ENCODE measurements at regions of chr5 and their contacts with region 1.

Region 1: GRCh38 chr5:169980418-169981053 is at the start of gene INSYN2B:
- DNase-seq: peak; percentile 47
- H3K4me3 ChIP-seq: peak within 1 kb of the TSS; percentile 70
- CTCF ChIP-seq: peak; percentile 78

Region 2: DNA sequence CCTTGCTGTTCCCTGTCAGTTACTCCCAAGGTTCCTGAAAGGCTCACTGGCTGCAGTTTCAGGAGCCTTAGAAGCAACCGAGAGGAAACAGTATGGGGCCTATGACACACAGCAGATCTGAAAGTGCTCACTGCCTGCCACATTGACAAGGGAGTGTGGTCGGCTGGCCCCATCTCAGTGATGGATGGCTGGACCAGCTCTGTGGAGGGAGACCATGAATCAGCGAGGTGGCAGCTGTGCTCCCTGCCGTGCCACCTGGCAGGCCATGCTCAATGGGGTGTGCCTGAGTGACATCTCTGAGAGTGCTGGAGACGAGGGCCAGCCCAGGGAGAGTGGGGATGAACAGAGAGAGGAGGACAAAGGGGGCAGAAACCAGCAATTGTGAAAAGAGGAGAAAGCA is 294.4 kb before region 1 on chr5:
- CTCF ChIA-PET with region 1: interaction called, 10 read pairs
- POLR2A ChIA-PET with region 1: no interaction called
- DNase-seq: no peak
- H3K4me3 ChIP-seq: no peak overlapping the region
- CTCF ChIP-seq: no peak

Region 3: DNA sequence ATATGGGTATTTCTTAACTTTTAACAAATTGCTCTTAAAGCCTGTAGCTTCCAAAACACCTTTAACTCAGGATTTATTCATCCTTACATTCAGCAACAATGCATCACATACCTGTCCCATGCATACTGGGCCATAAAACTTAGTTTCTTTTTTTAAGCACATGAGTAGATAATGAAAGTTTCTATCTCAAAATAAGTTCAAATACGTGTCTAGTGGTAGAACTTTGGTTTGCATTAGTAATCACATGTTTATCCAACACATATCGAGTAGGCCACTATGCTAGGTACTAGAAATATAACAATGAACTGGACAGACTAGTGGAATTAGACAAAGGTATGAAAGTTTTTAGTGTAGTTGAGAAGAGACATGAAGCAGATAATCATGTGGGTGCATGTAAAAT is 243.9 kb before region 1 on chr5:
- CTCF ChIA-PET with region 1: interaction called, 36 read pairs
- POLR2A ChIA-PET with region 1: no interaction called
- DNase-seq: no peak
- H3K4me3 ChIP-seq: no peak overlapping the region
- CTCF ChIP-seq: no peak

Region 4: GRCh38 chr5:169805527-169805934 is 175.0 kb before region 1 on chr5:
- CTCF ChIA-PET with region 1: interaction called, 26 read pairs
- POLR2A ChIA-PET with region 1: no interaction called
- DNase-seq: no peak
- H3K4me3 ChIP-seq: no peak overlapping the region
- CTCF ChIP-seq: no peak

Region 5: DNA sequence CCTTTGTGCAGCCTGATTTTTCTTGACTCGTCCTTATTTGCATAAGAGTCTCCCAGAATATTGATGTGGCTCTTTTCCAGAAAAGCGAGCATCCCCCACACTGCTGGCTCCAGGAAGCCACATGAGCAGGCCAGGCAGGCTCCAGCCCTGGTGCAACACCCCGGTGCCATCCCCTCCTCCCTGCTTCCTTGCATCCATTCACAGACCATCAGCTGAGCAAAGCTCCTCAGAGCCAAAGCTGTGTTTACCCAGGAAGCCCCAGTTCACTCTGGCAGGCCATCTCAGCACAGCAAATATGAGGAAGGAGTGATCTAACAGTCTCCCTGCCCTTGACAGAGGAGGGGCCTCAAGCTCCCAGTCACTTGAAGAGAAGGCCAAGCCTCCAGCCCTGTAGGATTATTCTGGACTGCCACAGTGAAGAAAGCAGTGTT is 34.7 kb before region 1 on chr5:
- CTCF ChIA-PET with region 1: interaction called, 32 read pairs
- POLR2A ChIA-PET with region 1: no interaction called
- DNase-seq: peak; percentile 89
- H3K4me3 ChIP-seq: peak overlapping the region; percentile 6; the same call in 1 of the 2 replicates
- CTCF ChIP-seq: no peak

Region 6: DNA sequence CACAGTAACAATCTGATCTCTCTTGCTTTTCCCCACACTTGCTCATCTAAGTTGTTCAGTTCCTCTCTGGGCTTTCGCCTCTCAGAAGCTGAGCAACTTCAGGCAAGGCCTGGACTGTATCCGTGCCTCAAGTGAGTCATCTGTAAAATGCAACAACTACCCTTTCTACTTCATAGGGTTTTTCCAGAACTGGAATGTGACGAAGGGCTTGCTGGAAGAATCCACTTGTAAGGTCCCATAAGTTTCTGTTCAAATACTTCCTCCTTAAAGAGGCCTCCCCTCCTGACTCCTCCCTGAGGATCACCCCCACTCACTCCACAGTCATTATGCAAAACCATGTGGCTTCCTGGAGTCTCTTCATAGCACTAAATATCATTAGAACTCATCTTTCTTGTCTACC is 17.3 kb after region 1 on chr5:
- CTCF ChIA-PET with region 1: interaction called, 12 read pairs
- POLR2A ChIA-PET with region 1: no interaction called
- DNase-seq: no peak
- H3K4me3 ChIP-seq: no peak overlapping the region
- CTCF ChIP-seq: no peak